ENCODE measurements at regions of chr11 and their contacts with region 1.

Region 1: GRCh38 chr11:114280696-114281095 is 15.5 kb upstream of the NNMT start:
- DNase-seq: peak; percentile 57
- H3K4me3 ChIP-seq: no peak overlapping the region
- H3K27ac ChIP-seq: no peak overlapping the region
- H3K4me1 ChIP-seq: peaks cover 20% of the 10 kb centered on the region
- H3K27me3 ChIP-seq: no peaks in the 10 kb centered on the region
- CTCF ChIP-seq: peak; percentile 72 to 76

Region 2: GRCh38 chr11:114295676-114296604 is 15.2 kb after region 1 on chr11 and contains the start of gene NNMT:
- CTCF ChIA-PET with region 1: interaction called, 3 read pairs
- dilution Hi-C with region 1: no loop called
- in situ Hi-C with region 1: no loop called
- intact Hi-C with region 1: loop called (anchors 2 kb)
- DNase-seq: peak; percentile 89
- H3K4me3 ChIP-seq: peak within 1 kb of the TSS; percentile 48 to 93 (median 73)
- H3K27ac ChIP-seq: peak within 1 kb of the TSS; percentile 98
- H3K4me1 ChIP-seq: peaks cover 51% of the 10 kb centered on the region
- H3K27me3 ChIP-seq: no peaks in the 10 kb centered on the region
- CTCF ChIP-seq: peak in 1 of 2 donors; percentile 10
- total RNA-seq, gene NNMT: 131 to 605 TPM

Region 3: DNA sequence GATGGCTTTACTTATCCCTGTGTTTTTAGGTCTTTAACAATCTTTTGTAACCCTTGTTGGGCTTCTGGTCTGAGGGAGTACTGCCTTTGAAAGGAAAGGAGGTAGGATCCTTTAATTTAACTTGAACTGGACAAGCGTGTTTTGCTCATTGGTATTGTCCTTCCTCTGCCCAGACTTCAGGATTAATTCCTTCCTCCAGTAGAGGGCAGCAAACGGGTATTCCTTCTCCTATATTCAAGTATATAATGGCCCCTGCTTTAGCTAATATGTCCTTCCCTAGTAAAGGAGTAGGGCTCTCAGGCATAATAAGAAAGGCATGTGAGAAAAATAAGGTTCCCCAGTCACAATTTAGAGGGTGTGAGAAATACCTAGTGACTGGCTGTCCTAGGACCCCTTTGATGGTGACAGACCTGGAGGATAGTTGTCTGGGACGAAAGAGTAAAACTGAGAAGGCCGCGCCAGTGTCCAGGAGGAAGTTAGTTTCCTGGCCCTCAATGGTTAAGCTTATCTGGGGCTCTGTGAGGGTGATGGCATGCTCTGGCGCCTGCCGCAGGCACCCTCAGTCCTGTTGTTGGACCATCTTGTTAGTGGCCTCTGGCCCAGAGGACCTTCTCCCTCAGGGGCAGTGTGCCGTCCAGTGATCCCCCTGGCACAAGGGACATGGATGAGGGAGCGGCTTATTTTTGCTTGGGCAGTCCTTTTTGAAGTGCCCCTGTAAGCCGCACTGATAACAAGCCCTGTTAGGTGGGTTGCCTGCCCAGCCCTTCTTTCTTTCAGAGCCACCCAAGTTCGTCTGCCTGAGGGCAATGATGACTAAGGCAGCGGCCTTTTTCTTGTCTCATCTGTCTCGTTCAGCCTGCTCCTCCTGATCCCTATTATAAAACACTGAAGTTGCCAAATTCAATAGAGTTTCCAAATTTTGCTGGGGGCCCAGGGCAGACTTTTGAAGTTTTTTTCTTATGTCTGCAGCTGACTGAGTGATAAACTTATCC is 67.8 kb after region 1 on chr11:
- CTCF ChIA-PET with region 1: no interaction called
- dilution Hi-C with region 1: loop called (anchors 5 kb)
- in situ Hi-C with region 1: no loop called
- intact Hi-C with region 1: loop called (anchors 2 kb)
- DNase-seq: peak; percentile 65
- H3K4me3 ChIP-seq: no peak overlapping the region
- H3K27ac ChIP-seq: no peak overlapping the region
- H3K4me1 ChIP-seq: peaks cover 15% of the 10 kb centered on the region
- H3K27me3 ChIP-seq: no peaks in the 10 kb centered on the region
- CTCF ChIP-seq: peak; percentile 48 to 62

Region 4: DNA sequence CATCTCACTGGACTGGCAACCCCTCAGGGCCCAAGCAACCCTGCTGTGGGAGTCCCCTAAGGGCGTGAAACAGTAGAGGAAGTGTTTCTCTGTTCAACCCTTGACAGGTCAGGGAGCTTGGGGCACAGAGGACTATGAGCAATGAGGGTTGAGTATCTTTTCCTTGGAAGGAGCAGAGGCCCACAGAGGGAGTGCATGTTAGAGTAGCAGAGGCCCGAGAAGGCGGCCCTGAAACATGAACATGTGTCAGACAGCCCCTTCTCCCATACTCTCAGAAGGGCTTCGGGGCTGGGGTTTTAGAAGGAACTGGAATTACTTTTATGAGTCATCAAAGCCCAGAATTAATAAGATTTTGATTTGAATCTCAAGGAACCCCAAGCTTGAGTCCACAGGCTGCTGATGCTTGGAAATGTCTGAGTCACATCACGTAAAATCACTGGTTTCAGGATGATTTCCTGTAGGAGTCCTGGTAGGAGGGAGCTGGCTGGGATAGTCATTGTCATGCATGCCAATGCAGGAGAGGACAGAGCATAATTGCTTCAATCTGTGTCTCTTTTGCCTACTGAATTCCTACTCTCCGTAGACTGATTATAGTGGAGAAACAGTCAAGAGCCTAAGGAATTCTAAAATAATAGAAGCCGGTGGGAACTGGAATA is 97.0 kb after region 1 on chr11:
- CTCF ChIA-PET with region 1: no interaction called
- dilution Hi-C with region 1: no loop called
- in situ Hi-C with region 1: no loop called
- intact Hi-C with region 1: no loop called
- DNase-seq: peak; percentile 47
- H3K4me3 ChIP-seq: no peak overlapping the region
- H3K27ac ChIP-seq: no peak overlapping the region
- H3K4me1 ChIP-seq: no peaks in the 10 kb centered on the region
- H3K27me3 ChIP-seq: peaks cover 4% of the 10 kb centered on the region
- CTCF ChIP-seq: no peak

Region 5: DNA sequence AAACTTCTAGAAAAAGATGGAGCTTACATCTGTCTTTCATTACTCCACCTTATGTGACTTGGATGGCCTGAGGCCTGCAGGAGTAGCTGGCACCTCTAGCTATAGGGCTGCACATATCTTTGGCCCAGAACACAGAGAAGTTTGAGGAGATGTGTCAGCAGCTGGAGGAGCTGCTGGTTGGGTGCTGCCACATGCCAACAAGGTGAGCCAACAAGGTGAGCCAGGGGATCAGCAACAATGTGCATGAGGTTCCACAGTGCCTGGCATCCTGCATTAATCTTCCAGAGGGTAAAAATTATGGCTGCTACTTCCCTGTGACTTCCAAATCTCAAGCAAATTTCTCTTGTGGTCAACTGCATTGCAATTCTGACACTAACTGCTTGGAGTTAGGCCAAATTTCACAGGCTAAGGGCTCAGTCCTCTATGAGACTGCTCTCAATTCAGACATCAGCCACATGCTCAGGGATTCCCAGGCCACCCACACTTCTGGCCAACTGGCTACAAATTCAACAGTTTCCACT is 135.8 kb after region 1 on chr11:
- CTCF ChIA-PET with region 1: no interaction called
- dilution Hi-C with region 1: no loop called
- in situ Hi-C with region 1: loop called in 1 of 2 experiments (anchors 25 kb)
- intact Hi-C with region 1: loop called (anchors 1 kb)
- DNase-seq: peak; percentile 89
- H3K4me3 ChIP-seq: no peak overlapping the region
- H3K27ac ChIP-seq: peak overlapping the region; percentile 53
- H3K4me1 ChIP-seq: peaks cover 23% of the 10 kb centered on the region
- H3K27me3 ChIP-seq: no peaks in the 10 kb centered on the region
- CTCF ChIP-seq: no peak

Region 6: DNA sequence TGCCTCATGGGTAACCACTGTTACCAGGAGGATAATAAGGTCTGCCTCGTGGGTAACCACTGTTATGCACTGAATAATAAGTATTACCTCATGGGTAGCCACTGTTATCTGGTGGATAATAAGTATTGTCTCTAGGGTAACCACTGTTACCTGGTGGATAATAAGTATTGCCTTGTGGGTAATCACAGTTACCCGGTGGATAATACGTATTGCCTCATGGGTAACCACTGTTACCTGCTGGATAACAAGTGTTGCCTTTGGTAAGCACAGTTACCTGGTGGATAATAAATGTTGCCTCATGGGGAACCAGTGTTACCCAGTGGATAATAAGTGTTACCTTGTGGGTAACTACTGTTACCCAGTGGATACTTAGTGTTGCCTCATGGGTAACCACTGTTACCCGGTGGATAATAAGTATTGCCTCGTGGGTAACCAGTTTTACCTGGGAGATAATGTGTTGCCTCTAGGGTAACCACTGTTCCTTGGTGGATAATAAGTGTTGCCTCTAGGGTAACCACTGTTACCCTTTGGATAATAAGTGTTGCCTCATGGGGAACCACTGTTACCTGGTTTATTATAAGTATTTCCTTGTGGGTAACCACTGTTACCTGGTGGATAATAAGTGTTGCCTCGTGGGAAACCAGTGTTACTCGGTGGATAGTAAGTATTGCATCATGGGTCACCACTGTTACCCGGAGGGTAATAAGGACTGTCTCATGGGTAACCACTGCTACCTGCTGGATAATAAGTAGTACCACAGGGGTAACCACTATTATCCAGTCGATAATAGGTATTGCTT is 325.5 kb after region 1 on chr11:
- CTCF ChIA-PET with region 1: no interaction called
- dilution Hi-C with region 1: no loop called
- in situ Hi-C with region 1: no loop called
- intact Hi-C with region 1: loop called (anchors 1 kb)
- DNase-seq: no peak
- H3K4me3 ChIP-seq: no peak overlapping the region
- H3K27ac ChIP-seq: no peak overlapping the region
- H3K4me1 ChIP-seq: no peaks in the 10 kb centered on the region
- H3K27me3 ChIP-seq: no peaks in the 10 kb centered on the region
- CTCF ChIP-seq: peak in 1 of 2 donors; percentile 5

Region 7: DNA sequence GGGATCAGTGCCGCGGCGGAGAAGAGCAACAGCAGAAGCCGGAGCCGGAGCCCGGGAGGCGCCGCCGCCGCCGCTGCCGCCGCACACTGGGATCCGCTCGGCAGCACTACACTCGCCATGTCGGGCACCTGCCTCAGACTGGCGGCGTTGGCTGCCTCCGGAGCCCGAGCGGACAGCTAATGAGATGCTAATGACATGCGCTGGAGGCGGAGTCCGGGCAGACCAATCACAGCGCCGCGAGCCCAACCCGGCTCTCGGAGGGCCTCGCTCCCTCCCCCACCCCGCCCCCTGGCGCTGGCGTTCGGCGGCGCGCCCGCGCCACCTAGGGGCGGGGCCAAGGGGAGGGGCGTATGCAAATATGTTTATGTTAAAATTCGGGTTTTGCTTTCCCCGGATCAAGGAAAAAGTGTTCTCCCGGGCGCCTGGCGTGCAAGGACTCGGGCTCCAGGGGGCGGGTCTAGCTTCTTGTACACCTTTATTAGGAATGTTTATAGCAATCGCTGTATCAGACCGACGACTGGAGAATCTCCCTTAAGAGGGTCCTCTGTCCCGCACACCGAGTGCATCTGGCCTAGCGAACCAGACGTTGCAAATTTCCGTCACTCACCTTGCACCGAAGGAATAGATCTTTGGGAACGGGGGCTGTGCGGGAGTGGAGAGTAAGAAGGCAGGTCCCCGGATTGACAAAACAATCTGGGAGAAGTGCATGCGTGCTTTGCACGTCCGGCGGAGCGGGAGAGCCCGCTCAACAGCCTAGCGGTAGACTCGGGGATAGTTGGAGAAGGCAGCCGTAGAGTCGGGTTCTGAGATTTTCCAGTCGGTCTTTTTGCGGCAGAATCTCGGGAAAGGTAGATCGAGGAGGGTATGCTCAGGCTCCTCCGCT is 1223.8 kb after region 1 on chr11 and contains the start of gene CADM1:
- CTCF ChIA-PET with region 1: no interaction called
- dilution Hi-C with region 1: no loop called
- in situ Hi-C with region 1: no loop called
- intact Hi-C with region 1: loop called (anchors 5 kb)
- DNase-seq: peak; percentile 90
- H3K4me3 ChIP-seq: peak within 1 kb of the TSS; percentile 74 to 99 (median 83)
- H3K27ac ChIP-seq: peak within 1 kb of the TSS; percentile 61
- H3K4me1 ChIP-seq: peaks cover 19% of the 10 kb centered on the region
- H3K27me3 ChIP-seq: no peaks in the 10 kb centered on the region
- CTCF ChIP-seq: peak; percentile 50 to 83
- total RNA-seq, gene CADM1: 16.9 to 19.3 TPM